ENCODE measurements at regions of chr17 and their contacts with region 1.

Region 1: GRCh38 chr17:45013021-45013997 is 38.1 kb downstream of the DCAKD start:
- DNase-seq: peak in 1 of 5 donors; percentile 52
- H3K4me3 ChIP-seq: no peak overlapping the region
- H3K27ac ChIP-seq: no peak overlapping the region
- H3K4me1 ChIP-seq: peaks cover 3% of the 10 kb centered on the region
- H3K27me3 ChIP-seq: no peaks in the 10 kb centered on the region
- CTCF ChIP-seq: no peak
- EP300 ChIP-seq: no peak
- POLR2A ChIP-seq: no peak

Region 2: DNA sequence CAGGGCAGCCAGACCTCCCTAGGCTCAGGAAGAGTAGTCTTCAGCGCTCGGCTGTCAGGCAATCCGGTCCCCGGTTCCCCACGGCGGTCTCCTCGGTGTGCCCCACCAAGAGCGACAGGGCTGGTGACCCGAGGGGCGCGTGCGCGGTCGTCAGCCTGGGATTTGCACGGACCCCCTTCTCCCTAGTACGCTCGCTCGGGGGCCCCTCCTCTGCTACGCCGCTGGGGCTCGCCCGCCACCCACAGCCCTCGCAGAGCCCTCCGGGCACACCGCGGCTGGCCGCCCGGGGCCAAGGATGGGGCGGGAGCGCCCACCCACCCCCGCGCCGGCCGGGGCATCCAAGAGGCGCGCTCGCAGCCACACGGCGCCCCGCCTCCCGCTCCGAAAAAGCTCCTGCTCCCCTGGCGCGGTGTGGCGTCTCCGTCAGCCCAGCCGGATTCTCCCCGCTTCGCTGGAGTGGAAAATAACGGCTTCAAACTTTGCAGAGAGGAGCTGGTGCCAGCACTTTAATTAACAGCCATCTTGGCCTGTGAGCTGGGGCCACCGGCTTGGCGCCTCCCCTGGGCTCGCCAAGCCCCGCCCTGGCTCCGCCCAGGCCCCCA is 43.1 kb before region 1 on chr17:
- intact Hi-C with region 1: loop called in 2 of 4 experiments (anchors 2 to 5 kb)
- DNase-seq: peak in 4 of 5 donors; percentile 52 to 74 (median 64)
- H3K4me3 ChIP-seq: peak overlapping the region; percentile 32
- H3K27ac ChIP-seq: peak overlapping the region in 1 of 2 donors; percentile 25
- H3K4me1 ChIP-seq: peaks cover 2% of the 10 kb centered on the region
- H3K27me3 ChIP-seq: peaks cover 9% of the 10 kb centered on the region
- CTCF ChIP-seq: no peak
- EP300 ChIP-seq: no peak
- POLR2A ChIP-seq: no peak

Region 3: DNA sequence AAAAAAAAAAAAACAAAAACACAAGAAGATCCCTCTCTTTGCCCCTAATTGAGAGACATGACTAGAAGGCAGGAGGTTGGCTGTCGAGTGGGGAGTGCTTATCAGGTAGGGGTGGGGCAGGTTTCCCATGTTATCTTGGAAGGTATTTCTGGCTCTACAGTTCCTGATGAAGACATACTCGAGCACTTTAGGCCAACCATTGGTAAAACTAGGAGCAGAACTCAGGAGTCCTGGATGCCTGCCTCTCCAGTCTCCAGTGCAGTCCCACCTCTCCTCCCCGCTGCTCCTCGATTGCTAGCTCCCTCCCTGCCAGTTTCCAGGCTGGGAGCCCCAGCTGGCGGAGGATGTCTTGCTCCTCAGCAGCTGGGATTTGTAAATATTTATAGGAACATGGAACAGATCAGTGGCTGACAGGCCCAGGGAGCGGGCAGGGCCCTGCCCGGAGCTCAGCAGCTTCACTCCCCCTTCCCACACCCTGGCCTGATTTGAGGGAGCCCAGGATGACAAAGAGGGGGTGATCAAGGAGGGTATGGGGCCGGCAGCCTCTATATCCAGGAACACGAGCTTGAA is 33.8 kb before region 1 on chr17:
- intact Hi-C with region 1: loop called in 2 of 4 experiments (anchors 2 to 5 kb)
- DNase-seq: peak; percentile 68 to 80 (median 78)
- H3K4me3 ChIP-seq: no peak overlapping the region
- H3K27ac ChIP-seq: peak overlapping the region; percentile 37 to 64
- H3K4me1 ChIP-seq: peaks cover 24% of the 10 kb centered on the region
- H3K27me3 ChIP-seq: no peaks in the 10 kb centered on the region
- CTCF ChIP-seq: no peak
- EP300 ChIP-seq: no peak
- POLR2A ChIP-seq: no peak

Region 4: GRCh38 chr17:44997733-44998520 is 15.4 kb before region 1 on chr17:
- intact Hi-C with region 1: no loop called
- DNase-seq: no peak
- H3K4me3 ChIP-seq: no peak overlapping the region
- H3K27ac ChIP-seq: no peak overlapping the region
- H3K4me1 ChIP-seq: no peaks in the 10 kb centered on the region
- H3K27me3 ChIP-seq: no peaks in the 10 kb centered on the region
- CTCF ChIP-seq: no peak
- EP300 ChIP-seq: no peak
- POLR2A ChIP-seq: no peak

Measured in ovary (tissue), 10 donors.